PC-3 (cell line): ENCODE measurements at regions of chr2 and their contacts with region 1.

Region 1: DNA sequence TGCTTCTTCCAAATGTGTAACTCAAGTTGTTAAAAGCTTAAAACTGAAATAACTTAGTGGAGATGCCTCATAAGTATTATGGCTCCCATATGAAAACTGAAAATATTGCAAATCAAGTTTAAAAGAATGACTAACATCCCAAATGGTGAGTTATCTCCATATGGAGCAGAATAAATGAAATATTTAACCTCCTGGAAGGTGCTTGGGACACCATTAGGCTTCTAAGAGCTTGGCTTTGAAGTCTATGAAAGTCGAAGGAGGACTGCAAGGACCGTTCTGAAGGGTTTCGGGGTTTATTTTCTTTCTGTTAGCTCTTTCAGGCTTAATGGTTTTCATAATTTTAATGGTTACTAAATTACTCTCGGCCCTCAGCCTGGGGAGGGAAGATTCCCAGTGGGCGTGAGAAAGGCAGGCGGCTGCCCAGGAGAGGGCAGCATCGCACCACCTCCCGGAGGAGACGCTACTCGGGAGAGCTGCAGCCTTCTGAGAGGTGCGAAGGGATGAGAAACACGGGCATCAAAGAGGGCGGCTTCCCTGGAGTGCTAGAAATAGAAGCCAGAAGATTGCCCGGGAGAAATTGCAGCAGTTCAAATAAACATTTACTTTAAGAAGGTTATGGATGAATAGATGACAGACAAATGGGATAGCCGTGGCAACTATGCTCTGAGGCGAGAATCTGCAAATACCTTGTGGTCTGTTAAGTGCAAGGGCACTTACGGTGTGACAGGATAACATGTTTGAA is 43.1 kb downstream of the MAP3K19 start:
- DNase-seq: peak; percentile 84
- ATAC-seq: peak; percentile 100
- H3K4me3 ChIP-seq: no peak overlapping the region
- H3K27ac ChIP-seq: no peak overlapping the region
- H3K4me1 ChIP-seq: no peaks in the 10 kb centered on the region
- H3K27me3 ChIP-seq: no peaks in the 10 kb centered on the region
- CTCF ChIP-seq: peak; percentile 95

Region 2: GRCh38 chr2:135124924-135125886 is 121.0 kb after region 1 on chr2:
- CTCF ChIA-PET with region 1: no interaction called
- POLR2A ChIA-PET with region 1: no interaction called
- intact Hi-C with region 1: loop called (anchors 5 kb)
- DNase-seq: peak; percentile 62
- ATAC-seq: peak; percentile 89
- H3K4me3 ChIP-seq: no peak overlapping the region
- H3K27ac ChIP-seq: no peak overlapping the region
- H3K4me1 ChIP-seq: peaks cover 20% of the 10 kb centered on the region
- H3K27me3 ChIP-seq: no peaks in the 10 kb centered on the region
- CTCF ChIP-seq: no peak

Region 3: GRCh38 chr2:135258193-135258592 is 254.0 kb after region 1 on chr2:
- CTCF ChIA-PET with region 1: no interaction called
- POLR2A ChIA-PET with region 1: no interaction called
- intact Hi-C with region 1: loop called (anchors 1 kb)
- DNase-seq: peak; percentile 60
- ATAC-seq: peak; percentile 82
- H3K4me3 ChIP-seq: no peak overlapping the region
- H3K27ac ChIP-seq: peak overlapping the region; percentile 85
- H3K4me1 ChIP-seq: peaks cover 19% of the 10 kb centered on the region
- H3K27me3 ChIP-seq: no peaks in the 10 kb centered on the region
- CTCF ChIP-seq: peak; percentile 56

Region 4: DNA sequence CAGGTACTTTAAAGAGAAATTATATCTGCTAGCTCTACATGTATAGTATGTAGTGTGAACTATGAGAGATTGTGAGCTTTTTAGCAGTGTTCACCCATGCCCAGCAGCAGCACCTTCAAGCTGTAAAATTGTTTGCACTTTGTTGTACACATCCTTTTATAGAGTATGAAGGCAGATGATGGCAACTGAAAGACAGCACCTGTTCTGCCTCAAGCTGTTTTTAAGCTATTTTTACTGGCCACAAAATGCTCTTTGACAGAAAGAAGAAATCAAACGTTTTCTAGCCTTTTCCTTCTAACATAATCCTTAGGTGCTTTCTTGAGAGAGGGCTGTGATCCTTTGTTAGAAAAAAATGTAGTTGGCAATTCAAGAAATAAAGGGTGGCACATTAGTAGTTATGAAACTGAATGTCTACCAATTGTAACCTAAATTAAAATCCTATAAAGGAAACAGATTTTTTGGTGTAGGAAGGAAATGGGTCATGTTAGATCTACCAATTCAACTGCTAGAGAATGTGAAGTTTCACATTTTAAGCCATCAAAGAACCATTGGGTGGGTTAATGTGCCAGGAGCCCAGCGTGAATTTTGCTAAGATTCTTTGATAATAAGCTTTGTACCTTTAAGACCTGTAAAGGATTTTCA is 586.6 kb after region 1 on chr2:
- CTCF ChIA-PET with region 1: no interaction called
- POLR2A ChIA-PET with region 1: no interaction called
- intact Hi-C with region 1: loop called (anchors 10 kb)
- DNase-seq: no peak
- ATAC-seq: peak; percentile 70
- H3K4me3 ChIP-seq: no peak overlapping the region
- H3K27ac ChIP-seq: no peak overlapping the region
- H3K4me1 ChIP-seq: no peaks in the 10 kb centered on the region
- H3K27me3 ChIP-seq: no peaks in the 10 kb centered on the region
- CTCF ChIP-seq: no peak